ENCODE measurements at regions of chr3 and their contacts with region 1.

Region 1: DNA sequence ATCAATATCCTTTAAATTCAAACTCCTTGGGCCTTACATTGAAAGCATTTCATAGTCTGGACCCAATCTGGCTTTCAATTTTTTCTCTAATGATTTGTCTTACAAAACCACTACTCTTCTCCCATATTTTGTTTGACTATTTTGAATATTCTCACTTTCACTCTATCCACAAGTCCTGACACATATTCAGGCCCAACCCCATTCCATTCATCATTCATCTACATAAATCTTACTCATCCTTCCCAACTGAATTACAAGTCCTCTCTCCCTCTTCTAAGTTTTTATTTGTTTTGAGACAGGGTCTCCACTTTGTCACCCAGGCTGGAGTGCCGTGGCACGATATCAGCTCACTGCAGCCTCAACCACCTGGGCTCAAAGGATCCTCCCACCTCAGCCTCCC is 43.6 kb downstream of the TOP2B start:
- DNase-seq: no peak
- ATAC-seq: no peak

Region 2: DNA sequence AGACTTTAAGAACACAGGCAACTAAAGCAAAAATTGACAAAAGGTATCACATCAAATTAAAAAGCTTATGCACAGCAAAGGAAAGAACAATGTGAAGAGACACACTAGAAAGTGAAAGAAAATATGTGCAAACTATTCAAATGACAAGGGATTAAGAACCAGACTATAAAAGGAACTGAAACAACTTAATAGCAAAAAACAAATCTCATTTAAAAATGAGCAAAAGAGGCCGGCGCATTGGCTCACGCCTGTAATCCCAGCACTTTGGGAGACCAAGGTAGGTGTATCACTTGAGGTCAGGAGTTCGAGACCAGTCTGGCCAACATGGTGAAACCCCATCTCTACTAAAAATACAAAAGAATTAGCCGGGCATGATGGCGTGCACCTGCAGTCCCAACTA is 147.8 kb after region 1 on chr3:
- intact Hi-C with region 1: loop called (anchors 10 kb)
- DNase-seq: no peak
- ATAC-seq: no peak

Measured in Right ventricle myocardium inferior (tissue), 1 donor.